ENCODE measurements at regions of chr1 and their contacts with region 1.

Region 1: DNA sequence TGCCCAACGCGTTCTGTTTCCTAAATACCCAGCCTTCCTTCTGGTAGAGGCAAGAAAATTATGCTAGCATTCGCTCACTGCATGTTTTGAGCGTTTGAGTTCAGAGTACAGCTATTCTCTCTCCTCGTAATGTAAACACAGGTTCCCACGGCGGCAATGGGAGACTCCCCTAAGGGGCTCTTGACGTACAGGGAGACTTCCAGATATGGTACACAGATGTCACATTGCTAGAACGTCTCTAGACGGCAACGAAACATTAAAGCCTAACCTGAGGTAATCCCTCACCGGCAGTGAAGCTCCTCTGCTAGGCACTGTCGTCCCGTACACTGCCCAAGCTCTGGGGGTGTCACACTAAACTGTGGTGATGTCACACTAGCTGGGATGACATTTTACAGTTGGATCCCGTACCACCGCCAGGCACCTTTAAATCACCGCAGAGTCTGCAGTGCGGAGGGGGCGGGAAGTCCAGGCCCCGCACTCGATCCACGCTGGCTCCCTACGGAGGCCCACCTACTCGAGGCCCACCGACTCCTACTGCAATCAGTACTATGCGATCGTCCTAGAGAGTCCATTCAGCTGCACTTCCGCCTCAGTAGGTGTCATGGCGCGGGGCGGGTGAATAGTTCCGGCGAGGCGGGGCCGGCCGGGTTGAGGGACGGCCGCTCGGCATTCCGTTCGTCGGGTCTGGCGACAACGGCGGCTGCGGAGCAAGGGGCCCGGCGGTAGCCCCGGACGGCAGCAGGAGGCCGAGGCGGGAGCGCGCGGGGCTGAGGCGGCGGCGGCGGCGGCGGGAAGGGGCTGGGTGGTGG is at the start of gene HIPK1:
- DNase-seq: peak; percentile 94
- H3K4me3 Mint-ChIP-seq: peak within 1 kb of the TSS; percentile 96
- H3K27ac Mint-ChIP-seq: peak within 1 kb of the TSS; percentile 99
- H3K4me1 Mint-ChIP-seq: peaks cover 40% of the 10 kb centered on the region
- H3K27me3 Mint-ChIP-seq: no peaks in the 10 kb centered on the region
- total RNA-seq, gene HIPK1: 47.7 to 51.0 TPM

Region 2: GRCh38 chr1:112735752-112736151 is 1193.4 kb before region 1 on chr1:
- CTCF ChIA-PET with region 1: no interaction called
- intact Hi-C with region 1: loop called (anchors 5 kb)
- DNase-seq: peak; percentile 46
- H3K4me3 Mint-ChIP-seq: no peak overlapping the region
- H3K27ac Mint-ChIP-seq: no peak overlapping the region
- H3K4me1 Mint-ChIP-seq: peaks cover 24% of the 10 kb centered on the region
- H3K27me3 Mint-ChIP-seq: peaks cover 19% of the 10 kb centered on the region

Region 3: GRCh38 chr1:113783254-113784099 is 145.7 kb before region 1 on chr1:
- CTCF ChIA-PET with region 1: no interaction called
- intact Hi-C with region 1: loop called (anchors 1 kb)
- DNase-seq: peak; percentile 60
- H3K4me3 Mint-ChIP-seq: peak overlapping the region; percentile 36
- H3K27ac Mint-ChIP-seq: peak overlapping the region; percentile 95
- H3K4me1 Mint-ChIP-seq: peaks cover 41% of the 10 kb centered on the region
- H3K27me3 Mint-ChIP-seq: no peaks in the 10 kb centered on the region

Region 4: DNA sequence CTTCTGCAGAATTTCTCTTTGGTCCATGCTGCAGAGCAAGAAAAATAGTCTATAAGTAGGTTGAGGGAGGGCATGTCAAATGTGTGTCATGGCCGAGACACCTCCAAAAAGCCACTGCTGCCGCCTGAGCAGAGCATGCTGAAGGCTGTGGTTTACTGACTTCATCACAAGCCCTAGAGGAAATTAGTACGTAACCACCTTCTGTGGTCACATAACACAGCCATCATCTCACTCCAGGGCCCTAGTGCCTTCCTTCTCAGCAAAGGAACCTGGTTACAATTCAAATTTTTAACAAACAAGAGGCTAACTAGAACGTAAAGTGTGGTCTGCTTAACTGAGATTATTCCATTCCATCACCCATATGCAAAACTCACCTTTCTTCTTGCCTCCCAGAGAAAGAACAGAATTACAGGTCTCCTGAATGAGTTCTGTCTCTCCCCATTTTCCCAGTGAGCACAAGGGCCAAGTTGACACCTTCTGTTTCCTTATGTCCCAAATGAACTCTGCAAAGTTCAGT is 57.5 kb before region 1 on chr1 and contains the start of gene PTPN22:
- CTCF ChIA-PET with region 1: interaction called, 12 read pairs
- intact Hi-C with region 1: loop called (anchors 1 kb)
- DNase-seq: peak; percentile 90
- H3K4me3 Mint-ChIP-seq: peak within 1 kb of the TSS; percentile 85
- H3K27ac Mint-ChIP-seq: peak within 1 kb of the TSS; percentile 98
- H3K4me1 Mint-ChIP-seq: peaks cover 64% of the 10 kb centered on the region
- H3K27me3 Mint-ChIP-seq: no peaks in the 10 kb centered on the region
- total RNA-seq, gene PTPN22: 43.9 to 50.9 TPM

Region 5: DNA sequence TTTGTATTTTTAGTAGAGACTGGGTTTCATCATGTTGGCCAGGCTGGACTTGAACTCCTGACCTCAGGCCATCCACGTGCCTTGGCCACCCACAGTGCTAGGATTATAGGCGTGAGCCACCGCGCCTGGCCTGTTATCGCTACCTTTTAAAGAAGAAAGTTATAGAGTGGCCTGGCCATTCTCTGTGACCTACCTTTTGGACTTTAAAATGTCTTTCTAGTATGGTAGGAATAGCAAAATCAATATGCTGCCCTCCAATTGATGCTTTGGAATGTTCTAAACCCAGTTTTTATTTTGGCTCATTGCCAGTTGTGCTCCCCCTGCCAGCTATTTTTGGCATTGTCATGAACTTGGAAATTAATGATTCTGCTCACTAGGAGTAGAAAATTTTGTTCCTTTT is 19.9 kb after region 1 on chr1:
- CTCF ChIA-PET with region 1: interaction called, 53 read pairs
- intact Hi-C with region 1: loop called (anchors 1 kb)
- DNase-seq: no peak
- H3K4me3 Mint-ChIP-seq: no peak overlapping the region
- H3K27ac Mint-ChIP-seq: peak overlapping the region; percentile 79
- H3K4me1 Mint-ChIP-seq: peaks cover 74% of the 10 kb centered on the region
- H3K27me3 Mint-ChIP-seq: no peaks in the 10 kb centered on the region

Measured in activated naive CD4-positive, alpha-beta T cell treated with anti-CD3 and anti-CD28 coated beads for 36 hours (primary cell).